ENCODE measurements at regions of chr4 and their contacts with region 1.

Region 1: GRCh38 chr4:82704156-82704555 is 94.4 kb downstream of the SCD5 start:
- DNase-seq: no peak
- H3K4me3 ChIP-seq: no peak overlapping the region
- H3K4me3 Mint-ChIP-seq: no peak overlapping the region
- H3K27ac ChIP-seq: no peak overlapping the region
- H3K27ac Mint-ChIP-seq: no peak overlapping the region
- H3K4me1 ChIP-seq: no peaks in the 10 kb centered on the region
- H3K4me1 Mint-ChIP-seq: peaks cover 0 to 2% (median 0%) of the 10 kb centered on the region in 3 donors
- H3K27me3 ChIP-seq: no peaks in the 10 kb centered on the region
- H3K27me3 Mint-ChIP-seq: no peaks in the 10 kb centered on the region

Region 2: DNA sequence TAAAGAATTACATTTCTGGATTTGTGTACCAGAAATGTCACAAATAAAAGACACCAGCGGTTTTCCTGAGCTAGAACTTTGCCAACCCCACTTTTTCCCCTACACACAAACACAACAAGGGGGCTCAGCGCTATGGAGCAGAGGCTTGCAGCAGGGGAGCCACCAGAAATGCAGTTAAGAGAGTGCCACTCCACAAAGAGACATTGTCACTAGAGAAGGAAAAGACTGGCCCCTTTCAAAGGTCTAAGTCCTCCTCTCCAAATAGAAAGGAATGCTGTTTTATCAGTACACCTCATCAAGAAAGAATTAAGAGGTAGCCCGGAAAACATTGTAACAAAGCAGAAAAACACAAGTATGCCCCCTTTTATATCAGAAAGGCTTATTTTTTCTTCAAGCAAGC is 749.9 kb before region 1 on chr4:
- CTCF ChIA-PET with region 1: no interaction called
- POLR2A ChIA-PET with region 1: interaction called, 14 read pairs
- DNase-seq: no peak
- H3K4me3 ChIP-seq: no peak overlapping the region
- H3K4me3 Mint-ChIP-seq: no peak overlapping the region
- H3K27ac ChIP-seq: no peak overlapping the region
- H3K27ac Mint-ChIP-seq: no peak overlapping the region
- H3K4me1 ChIP-seq: no peaks in the 10 kb centered on the region
- H3K4me1 Mint-ChIP-seq: no peaks in the 10 kb centered on the region
- H3K27me3 ChIP-seq: no peaks in the 10 kb centered on the region
- H3K27me3 Mint-ChIP-seq: peaks cover 0 to 28% of the 10 kb centered on the region in 2 donors

Region 3: DNA sequence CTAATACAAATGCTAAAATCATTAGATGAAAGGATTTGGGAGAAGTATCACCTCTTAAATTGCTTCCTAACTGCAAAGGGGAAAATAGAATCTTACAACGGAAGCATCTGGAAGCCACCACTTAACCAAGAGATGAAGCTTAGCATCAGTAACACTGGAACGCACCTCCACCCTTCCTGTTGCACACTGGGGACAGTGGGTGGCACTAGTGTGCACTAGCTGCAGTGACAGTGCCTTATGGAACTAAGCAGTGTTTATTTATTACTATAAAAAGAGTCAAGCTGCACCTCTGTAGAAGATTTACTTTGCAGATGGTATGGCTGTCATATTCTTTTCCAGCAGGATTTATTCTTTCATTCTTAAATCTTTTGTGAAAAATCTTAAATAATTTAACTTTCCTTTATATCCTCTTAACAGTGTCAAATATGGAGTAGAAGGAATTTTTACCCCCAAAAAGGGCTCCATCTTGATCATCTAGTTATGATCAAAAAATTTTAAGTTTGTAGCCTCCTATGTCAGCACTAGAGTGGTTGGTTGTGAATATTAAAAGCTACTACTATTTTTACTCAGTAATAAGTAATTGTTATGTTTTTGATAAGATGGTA is 17.8 kb after region 1 on chr4:
- CTCF ChIA-PET with region 1: no interaction called
- POLR2A ChIA-PET with region 1: no interaction called
- DNase-seq: peak in 1 of 5 donors; percentile 3
- H3K4me3 ChIP-seq: no peak overlapping the region
- H3K4me3 Mint-ChIP-seq: no peak overlapping the region
- H3K27ac ChIP-seq: no peak overlapping the region
- H3K27ac Mint-ChIP-seq: peak overlapping the region in 2 of 8 donors; percentile 32 to 58
- H3K4me1 ChIP-seq: no peaks in the 10 kb centered on the region
- H3K4me1 Mint-ChIP-seq: peaks cover 0 to 5% (median 3%) of the 10 kb centered on the region in 3 donors
- H3K27me3 ChIP-seq: no peaks in the 10 kb centered on the region
- H3K27me3 Mint-ChIP-seq: no peaks in the 10 kb centered on the region

Measured in CD8-positive, alpha-beta memory T cell (primary cell).